CD14-positive monocyte (primary cell): ENCODE measurements at regions of chr18 and their contacts with region 1.

Region 1: DNA sequence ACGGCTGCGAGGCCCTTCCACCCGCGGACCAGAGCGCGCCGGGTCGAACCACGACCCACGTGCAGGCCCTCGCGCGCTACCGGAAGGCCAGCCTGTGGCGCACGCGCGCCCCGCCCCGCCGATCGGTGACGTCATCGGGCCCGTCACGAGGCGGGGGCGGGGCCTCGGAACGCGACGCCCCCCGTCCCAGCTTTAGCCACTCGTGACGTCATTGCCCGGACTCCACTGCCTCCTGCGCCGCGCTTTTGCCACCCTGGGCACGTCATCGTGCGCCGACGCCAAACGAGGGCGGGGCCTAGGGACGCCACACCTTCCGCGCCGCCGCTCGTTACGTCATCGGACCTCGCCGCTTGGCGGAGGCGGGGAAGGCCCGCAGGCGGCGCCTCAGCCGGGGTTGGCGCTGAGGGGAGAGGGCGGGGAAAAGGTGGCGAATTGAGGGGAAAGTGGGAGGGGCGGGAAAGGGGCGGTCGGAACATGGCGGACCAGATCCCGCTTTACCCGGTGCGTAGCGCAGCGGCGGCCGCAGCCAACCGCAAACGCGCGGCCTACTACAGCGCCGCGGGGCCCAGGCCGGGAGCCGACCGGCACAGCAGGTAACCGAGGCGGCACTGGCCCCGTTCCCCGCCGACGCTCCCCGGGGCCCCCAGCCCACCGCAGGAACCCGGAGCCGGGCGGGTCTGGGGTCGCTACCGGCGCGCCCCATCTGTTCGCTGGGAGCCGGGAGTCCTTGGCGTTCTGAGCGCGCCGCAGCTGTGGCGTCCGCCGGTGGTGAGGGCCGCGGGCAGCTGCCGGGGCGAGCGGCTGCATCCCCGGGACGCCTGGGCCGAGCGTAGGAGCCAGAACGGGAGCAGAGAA is at the start of gene ATP9B:
- DNase-seq: peak; percentile 96 to 100 (median 99)
- H3K4me3 ChIP-seq: peak within 1 kb of the TSS; percentile 64 to 94 (median 89)
- H3K4me3 Mint-ChIP-seq: peak within 1 kb of the TSS; percentile 83 to 87
- H3K27ac ChIP-seq: peak within 1 kb of the TSS; percentile 74 to 92
- H3K27ac Mint-ChIP-seq: peak within 1 kb of the TSS; percentile 88 to 97 (median 91)
- H3K4me1 ChIP-seq: peaks cover 21 to 32% of the 10 kb centered on the region in 2 donors
- H3K4me1 Mint-ChIP-seq: peaks cover 29% of the 10 kb centered on the region
- H3K27me3 ChIP-seq: peaks cover 0 to 6% of the 10 kb centered on the region in 2 donors
- H3K27me3 Mint-ChIP-seq: peaks cover 8 to 19% (median 9%) of the 10 kb centered on the region in 3 donors
- CTCF ChIP-seq: no peak
- polyA plus RNA-seq, gene ATP9B: 7.2 to 20.3 (median 14.0) TPM

Region 2: GRCh38 chr18:78643004-78643403 is 426.2 kb before region 1 on chr18:
- intact Hi-C with region 1: loop called in 1 of 2 experiments (anchors 5 kb)
- DNase-seq: peak; percentile 74 to 88 (median 82)
- H3K4me3 ChIP-seq: peak overlapping the region in 1 of 3 experiments; percentile 0
- H3K4me3 Mint-ChIP-seq: peak overlapping the region in 1 of 2 donors; percentile 27
- H3K27ac ChIP-seq: peak overlapping the region; percentile 51 to 65
- H3K27ac Mint-ChIP-seq: peak overlapping the region; percentile 75 to 93 (median 87)
- H3K4me1 ChIP-seq: peaks cover 35 to 43% of the 10 kb centered on the region in 2 donors
- H3K4me1 Mint-ChIP-seq: peaks cover 39% of the 10 kb centered on the region
- H3K27me3 ChIP-seq: peaks cover 0 to 17% of the 10 kb centered on the region in 2 donors
- H3K27me3 Mint-ChIP-seq: peaks cover 13 to 21% (median 13%) of the 10 kb centered on the region in 3 donors
- CTCF ChIP-seq: no peak

Region 3: GRCh38 chr18:79151191-79151590 is 82.0 kb after region 1 on chr18:
- intact Hi-C with region 1: loop called (anchors 5 to 10 kb)
- DNase-seq: no peak
- H3K4me3 ChIP-seq: no peak overlapping the region
- H3K4me3 Mint-ChIP-seq: no peak overlapping the region
- H3K27ac ChIP-seq: no peak overlapping the region
- H3K27ac Mint-ChIP-seq: no peak overlapping the region
- H3K4me1 ChIP-seq: no peaks in the 10 kb centered on the region
- H3K4me1 Mint-ChIP-seq: peaks cover 2% of the 10 kb centered on the region
- H3K27me3 ChIP-seq: no peaks in the 10 kb centered on the region
- H3K27me3 Mint-ChIP-seq: peaks cover 0 to 1% (median 0%) of the 10 kb centered on the region in 3 donors
- CTCF ChIP-seq: no peak

Region 4: DNA sequence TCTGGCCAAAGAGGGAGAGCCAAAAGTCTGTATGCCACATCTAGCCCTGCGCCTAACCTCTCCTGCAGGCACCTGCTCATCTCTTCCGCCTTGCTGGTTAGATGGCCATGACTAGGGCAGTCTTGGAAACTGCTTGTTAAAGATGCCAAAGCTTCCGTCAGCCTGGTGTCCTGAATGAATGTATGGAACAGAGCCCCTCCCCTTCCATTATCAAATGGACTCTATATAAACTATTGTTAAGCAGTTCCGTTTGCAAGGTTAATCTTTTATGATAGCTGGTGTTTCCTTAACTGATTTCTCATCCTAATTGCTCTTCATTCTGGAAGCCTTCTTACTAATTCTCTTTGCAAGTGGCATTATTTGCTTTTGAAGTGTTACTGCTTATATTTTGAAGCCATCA is 87.2 kb after region 1 on chr18:
- intact Hi-C with region 1: loop called (anchors 5 to 10 kb)
- DNase-seq: no peak
- H3K4me3 ChIP-seq: no peak overlapping the region
- H3K4me3 Mint-ChIP-seq: no peak overlapping the region
- H3K27ac ChIP-seq: peak overlapping the region in 1 of 2 donors; percentile 55
- H3K27ac Mint-ChIP-seq: peak overlapping the region in 6 of 7 donors; percentile 85 to 95 (median 88)
- H3K4me1 ChIP-seq: peaks cover 3 to 5% of the 10 kb centered on the region in 2 donors
- H3K4me1 Mint-ChIP-seq: peaks cover 14% of the 10 kb centered on the region
- H3K27me3 ChIP-seq: no peaks in the 10 kb centered on the region
- H3K27me3 Mint-ChIP-seq: peaks cover 0 to 1% (median 0%) of the 10 kb centered on the region in 3 donors
- CTCF ChIP-seq: no peak

Region 5: DNA sequence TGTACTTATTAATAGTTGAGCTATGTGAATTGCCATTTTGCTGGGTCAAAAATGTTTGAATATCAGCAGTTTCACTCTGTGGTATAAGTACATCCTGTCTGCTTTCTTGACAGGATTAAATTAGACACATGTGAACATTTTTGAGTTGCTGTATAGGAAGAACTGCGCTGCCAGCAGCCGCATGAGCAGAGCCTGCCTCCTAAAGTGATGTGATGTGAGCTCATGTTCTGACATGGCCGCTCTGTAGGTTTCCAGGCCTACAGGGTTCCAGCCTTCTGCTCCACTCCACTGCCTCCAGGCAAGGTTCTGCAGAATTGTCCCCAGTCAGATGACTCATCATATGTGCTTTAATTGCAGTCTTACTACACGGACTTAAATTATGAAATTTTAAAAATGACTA is 206.8 kb after region 1 on chr18:
- intact Hi-C with region 1: no loop called
- DNase-seq: no peak
- H3K4me3 ChIP-seq: no peak overlapping the region
- H3K4me3 Mint-ChIP-seq: no peak overlapping the region
- H3K27ac ChIP-seq: no peak overlapping the region
- H3K27ac Mint-ChIP-seq: no peak overlapping the region
- H3K4me1 ChIP-seq: no peaks in the 10 kb centered on the region
- H3K4me1 Mint-ChIP-seq: no peaks in the 10 kb centered on the region
- H3K27me3 ChIP-seq: no peaks in the 10 kb centered on the region
- H3K27me3 Mint-ChIP-seq: no peaks in the 10 kb centered on the region
- CTCF ChIP-seq: no peak

Region 6: GRCh38 chr18:79411614-79412526 is 342.7 kb after region 1 on chr18:
- intact Hi-C with region 1: loop called in 1 of 2 experiments (anchors 10 kb)
- DNase-seq: no peak
- H3K4me3 ChIP-seq: no peak overlapping the region
- H3K4me3 Mint-ChIP-seq: no peak overlapping the region
- H3K27ac ChIP-seq: no peak overlapping the region
- H3K27ac Mint-ChIP-seq: no peak overlapping the region
- H3K4me1 ChIP-seq: peaks cover under 1 to 2% of the 10 kb centered on the region in 2 donors
- H3K4me1 Mint-ChIP-seq: peaks cover 3% of the 10 kb centered on the region
- H3K27me3 ChIP-seq: no peaks in the 10 kb centered on the region
- H3K27me3 Mint-ChIP-seq: no peaks in the 10 kb centered on the region
- CTCF ChIP-seq: no peak

Region 7: DNA sequence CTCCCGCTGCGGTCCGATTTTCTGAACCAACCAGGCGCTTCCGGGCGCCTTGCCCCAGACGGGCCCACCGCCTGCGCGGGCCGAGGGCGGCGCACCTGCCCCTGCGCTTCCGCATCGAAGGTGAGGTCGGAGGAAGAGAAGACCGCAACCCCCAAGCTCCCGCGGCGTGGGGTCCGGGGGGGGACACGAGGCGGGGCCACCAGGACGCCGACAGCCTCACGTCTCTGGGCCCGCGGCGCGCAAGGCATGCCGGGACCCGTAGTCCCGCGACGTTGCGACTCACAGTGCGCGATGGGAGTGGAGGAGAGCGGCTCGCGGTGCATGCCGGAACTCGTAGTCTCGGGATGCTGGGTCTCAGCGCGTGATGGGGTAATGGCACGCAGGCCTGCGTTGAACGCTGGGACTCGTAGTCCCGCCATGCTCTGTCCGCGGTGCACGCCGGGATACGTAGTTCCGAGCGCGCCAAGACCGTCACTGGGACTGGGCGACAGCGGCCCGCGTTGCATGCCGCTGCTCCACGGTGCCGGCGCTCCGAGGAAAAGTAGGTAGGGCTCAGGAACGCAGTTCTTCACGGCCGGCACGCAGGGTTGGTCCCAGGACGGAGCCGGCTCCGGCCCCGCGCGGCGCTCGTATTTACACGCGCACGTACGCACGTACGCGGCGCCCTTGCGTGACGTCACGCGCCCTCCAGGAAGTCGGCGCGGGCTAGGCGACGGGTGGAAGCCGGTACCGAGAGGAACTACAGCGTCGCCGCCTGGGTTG is 610.1 kb after region 1 on chr18 and contains the start of gene CTDP1:
- intact Hi-C with region 1: loop called (anchors 10 kb)
- DNase-seq: peak; percentile 99
- H3K4me3 ChIP-seq: peak within 1 kb of the TSS; percentile 85 to 91 (median 86)
- H3K4me3 Mint-ChIP-seq: peak within 1 kb of the TSS; percentile 85 to 91
- H3K27ac ChIP-seq: peak within 1 kb of the TSS; percentile 91 to 97
- H3K27ac Mint-ChIP-seq: peak within 1 kb of the TSS; percentile 96 to 99 (median 98)
- H3K4me1 ChIP-seq: peaks cover 35 to 50% of the 10 kb centered on the region in 2 donors
- H3K4me1 Mint-ChIP-seq: peaks cover 58% of the 10 kb centered on the region
- H3K27me3 ChIP-seq: no peaks in the 10 kb centered on the region
- H3K27me3 Mint-ChIP-seq: peaks cover 0 to 4% (median 0%) of the 10 kb centered on the region in 3 donors
- CTCF ChIP-seq: no peak
- polyA plus RNA-seq, gene CTDP1: 9.1 to 13.9 (median 9.1) TPM